Endothelial cell of umbilical vein (primary cell): ENCODE measurements at regions of chr12 and their contacts with region 1.

Region 1: GRCh38 chr12:46430340-46430948 is 57.9 kb upstream of the SLC38A2 start:
- DNase-seq: peak; percentile 97
- H3K4me3 ChIP-seq: peak overlapping the region in 1 of 3 experiments; percentile 48
- H3K27ac ChIP-seq: peak overlapping the region; percentile 99
- H3K4me1 ChIP-seq: peaks cover 43% of the 10 kb centered on the region
- H3K27me3 ChIP-seq: no peaks in the 10 kb centered on the region
- CTCF ChIP-seq: no peak
- POLR2A ChIP-seq: peak; percentile 72

Region 2: GRCh38 chr12:46020768-46021167 is 409.7 kb before region 1 on chr12:
- CTCF ChIA-PET with region 1: no interaction called
- POLR2A ChIA-PET with region 1: no interaction called
- dilution Hi-C with region 1: no loop called
- intact Hi-C with region 1: no loop called
- DNase-seq: no peak
- H3K4me3 ChIP-seq: no peak overlapping the region
- H3K27ac ChIP-seq: no peak overlapping the region
- H3K4me1 ChIP-seq: no peaks in the 10 kb centered on the region
- H3K27me3 ChIP-seq: peaks cover 0 to 4% of the 10 kb centered on the region in 2 experiments
- CTCF ChIP-seq: no peak
- POLR2A ChIP-seq: no peak

Region 3: DNA sequence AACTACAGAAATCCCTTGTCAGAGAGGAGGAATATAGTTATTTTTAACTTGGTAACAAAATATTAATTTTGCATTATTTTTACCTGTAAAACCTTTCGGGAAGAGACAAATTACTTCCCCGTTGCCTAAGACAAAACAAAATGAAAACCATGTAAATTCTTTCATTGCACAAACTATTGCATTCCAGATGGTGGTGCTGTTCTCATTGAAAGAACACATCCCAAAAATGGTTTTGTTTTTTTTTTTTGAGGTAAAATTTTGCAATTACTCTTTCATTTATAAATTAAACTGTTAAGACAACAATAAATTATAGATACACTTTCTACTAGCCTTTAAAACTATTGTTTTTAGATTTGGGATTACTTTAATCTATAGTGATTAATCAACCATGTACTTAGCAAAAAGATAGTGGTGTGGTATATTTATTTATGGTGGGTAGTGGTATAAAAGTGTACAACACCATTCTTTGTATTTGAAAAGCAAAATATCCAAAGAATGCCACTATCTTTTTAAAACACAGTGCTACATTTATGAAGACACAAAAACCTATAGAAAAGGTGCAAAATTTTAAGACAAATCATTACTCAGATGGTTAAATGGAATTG is 277.1 kb before region 1 on chr12:
- CTCF ChIA-PET with region 1: no interaction called
- POLR2A ChIA-PET with region 1: no interaction called
- dilution Hi-C with region 1: no loop called
- intact Hi-C with region 1: loop called (anchors 2 kb)
- DNase-seq: peak; percentile 37
- H3K4me3 ChIP-seq: no peak overlapping the region
- H3K27ac ChIP-seq: peak overlapping the region; percentile 28
- H3K4me1 ChIP-seq: peaks cover 23% of the 10 kb centered on the region
- H3K27me3 ChIP-seq: no peaks in the 10 kb centered on the region
- CTCF ChIP-seq: peak; percentile 38 to 40
- POLR2A ChIP-seq: no peak

Region 4: DNA sequence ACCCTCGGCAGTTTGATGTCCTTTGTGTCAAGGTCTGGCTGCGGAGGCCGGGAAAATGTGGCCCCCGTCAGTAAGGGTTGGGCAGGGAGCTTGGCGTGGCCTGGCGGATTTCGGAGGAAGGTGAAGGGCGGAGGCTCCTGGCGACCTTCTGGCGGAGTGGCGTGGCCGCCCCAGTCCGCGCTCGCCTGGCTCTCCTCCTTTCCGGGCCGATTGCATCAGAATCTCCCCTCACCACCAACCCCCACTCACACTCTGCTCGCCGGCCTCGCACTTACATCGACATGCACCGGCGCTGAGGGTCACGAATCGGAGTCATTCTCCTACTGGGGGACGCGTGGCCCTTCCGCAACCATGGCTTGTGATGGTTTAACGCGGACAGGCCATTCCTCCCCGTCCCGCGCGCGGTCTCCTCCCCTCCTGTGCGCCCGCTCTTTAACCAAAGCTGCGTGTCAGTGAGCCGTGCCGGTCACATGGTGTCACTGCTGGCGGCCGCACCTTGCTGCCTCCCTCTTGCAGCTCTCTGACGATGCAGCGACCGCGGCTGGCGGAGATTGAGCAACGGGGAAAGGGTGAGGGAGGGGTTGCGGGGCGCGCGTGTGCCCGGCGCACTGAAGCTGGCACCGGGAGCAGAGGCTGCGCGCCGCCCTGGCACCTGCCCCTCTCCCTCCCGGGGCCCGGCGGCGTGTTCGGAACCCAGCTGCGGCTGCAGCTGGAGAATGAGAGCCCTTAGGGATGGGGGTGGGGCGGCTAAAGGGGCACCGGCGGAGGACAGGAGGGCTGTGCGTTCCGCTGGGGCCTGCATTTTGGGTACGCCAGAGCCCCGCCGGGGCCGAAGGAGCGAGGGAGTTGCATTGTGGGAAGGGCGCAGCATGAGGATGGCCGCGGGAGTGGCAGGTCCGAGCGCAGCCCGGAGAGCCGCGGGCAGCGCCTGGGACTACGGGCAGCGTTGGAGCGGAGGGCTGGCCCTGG is 161.6 kb before region 1 on chr12 and contains the start of gene SLC38A1:
- CTCF ChIA-PET with region 1: no interaction called
- POLR2A ChIA-PET with region 1: no interaction called
- dilution Hi-C with region 1: no loop called
- intact Hi-C with region 1: loop called (anchors 2 kb)
- DNase-seq: peak; percentile 73
- H3K4me3 ChIP-seq: peak within 1 kb of the TSS; percentile 59 to 85 (median 84)
- H3K27ac ChIP-seq: peak within 1 kb of the TSS; percentile 82
- H3K4me1 ChIP-seq: peaks cover 31% of the 10 kb centered on the region
- H3K27me3 ChIP-seq: no peaks in the 10 kb centered on the region
- CTCF ChIP-seq: no peak
- POLR2A ChIP-seq: peak; percentile 66
- total RNA-seq, gene SLC38A1: 81.0 and 86.4 TPM in 2 replicates

Region 5: DNA sequence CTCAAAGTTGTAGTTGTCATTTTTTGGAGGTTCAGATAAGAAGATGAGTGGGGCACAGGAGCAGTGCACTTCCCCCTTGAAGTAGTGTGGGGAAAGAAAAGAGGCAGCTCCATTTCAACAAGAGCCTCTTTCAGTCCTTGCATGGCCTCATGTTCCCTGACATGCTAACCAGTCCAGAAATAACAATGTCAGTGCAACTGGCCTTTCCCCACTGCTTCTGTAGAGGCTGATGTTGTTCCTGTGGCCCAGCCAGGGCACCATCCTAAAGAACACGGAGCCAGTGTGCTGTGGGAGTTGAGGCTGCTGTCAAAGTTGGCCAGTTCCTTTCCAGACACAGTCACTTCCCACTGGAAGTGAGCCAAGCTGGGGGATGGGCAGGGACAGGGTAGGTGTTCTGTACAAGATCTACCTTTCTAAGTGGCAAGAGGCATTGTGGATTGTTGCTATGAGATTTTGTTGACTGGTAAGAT is 19.9 kb after region 1 on chr12:
- CTCF ChIA-PET with region 1: interaction called, 11 read pairs
- POLR2A ChIA-PET with region 1: no interaction called
- dilution Hi-C with region 1: no loop called
- intact Hi-C with region 1: loop called (anchors 1 kb)
- DNase-seq: peak; percentile 73
- H3K4me3 ChIP-seq: no peak overlapping the region
- H3K27ac ChIP-seq: peak overlapping the region; percentile 84
- H3K4me1 ChIP-seq: peaks cover 64% of the 10 kb centered on the region
- H3K27me3 ChIP-seq: no peaks in the 10 kb centered on the region
- CTCF ChIP-seq: no peak
- POLR2A ChIP-seq: no peak

Region 6: GRCh38 chr12:46492471-46493351 is 62.3 kb after region 1 on chr12:
- CTCF ChIA-PET with region 1: interaction called, 3 read pairs
- POLR2A ChIA-PET with region 1: interaction called, 10 read pairs
- dilution Hi-C with region 1: no loop called
- intact Hi-C with region 1: loop called (anchors 1 kb)
- DNase-seq: peak; percentile 93
- H3K4me3 ChIP-seq: no peak overlapping the region
- H3K27ac ChIP-seq: peak overlapping the region; percentile 97
- H3K4me1 ChIP-seq: peaks cover 43% of the 10 kb centered on the region
- H3K27me3 ChIP-seq: no peaks in the 10 kb centered on the region
- CTCF ChIP-seq: no peak
- POLR2A ChIP-seq: peak; percentile 63

Region 7: DNA sequence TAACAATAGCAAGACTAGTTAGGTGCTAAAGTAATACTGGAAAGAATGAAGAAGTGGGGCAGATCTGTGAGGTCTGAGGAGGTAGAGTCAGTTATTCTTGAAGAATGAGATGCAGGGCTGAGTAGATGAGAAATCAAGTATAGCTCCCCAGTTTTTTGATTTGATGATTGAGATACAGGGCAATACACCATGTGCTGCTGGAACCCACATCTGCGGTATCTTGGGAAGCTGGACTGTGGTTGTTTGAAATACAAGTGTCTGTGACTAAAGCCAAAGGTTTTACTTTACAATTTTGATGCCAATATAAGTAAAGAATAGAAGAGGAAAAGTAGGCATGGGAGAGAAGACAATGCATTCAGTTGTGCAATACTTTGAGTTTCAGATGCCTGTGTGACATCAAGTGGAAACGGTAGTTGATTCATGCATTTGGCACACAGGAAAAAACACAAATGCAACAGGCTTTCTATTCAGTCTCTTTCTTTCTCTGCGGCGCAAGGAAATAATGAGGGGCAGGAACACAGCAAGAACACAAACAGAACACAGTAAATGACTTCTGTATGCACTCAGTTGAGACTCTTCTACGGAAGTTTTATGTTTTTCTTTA is 132.3 kb after region 1 on chr12:
- CTCF ChIA-PET with region 1: no interaction called
- POLR2A ChIA-PET with region 1: no interaction called
- dilution Hi-C with region 1: no loop called
- intact Hi-C with region 1: loop called (anchors 1 kb)
- DNase-seq: peak; percentile 94
- H3K4me3 ChIP-seq: peak overlapping the region in 1 of 3 experiments; percentile 28
- H3K27ac ChIP-seq: peak overlapping the region; percentile 96
- H3K4me1 ChIP-seq: peaks cover 24% of the 10 kb centered on the region
- H3K27me3 ChIP-seq: no peaks in the 10 kb centered on the region
- CTCF ChIP-seq: no peak
- POLR2A ChIP-seq: peak; percentile 39